ENCODE measurements at regions of chr16 and their contacts with region 1.

Region 1: GRCh38 chr16:74438492-74439041 is 17.3 kb upstream of the CLEC18B start:
- DNase-seq: no peak
- ATAC-seq: no peak
- H3K4me3 ChIP-seq: no peak overlapping the region
- H3K27ac ChIP-seq: no peak overlapping the region
- H3K4me1 ChIP-seq: peaks cover 0 to 9% of the 10 kb centered on the region in 2 donors
- H3K27me3 ChIP-seq: no peaks in the 10 kb centered on the region
- CTCF ChIP-seq: no peak

Region 2: DNA sequence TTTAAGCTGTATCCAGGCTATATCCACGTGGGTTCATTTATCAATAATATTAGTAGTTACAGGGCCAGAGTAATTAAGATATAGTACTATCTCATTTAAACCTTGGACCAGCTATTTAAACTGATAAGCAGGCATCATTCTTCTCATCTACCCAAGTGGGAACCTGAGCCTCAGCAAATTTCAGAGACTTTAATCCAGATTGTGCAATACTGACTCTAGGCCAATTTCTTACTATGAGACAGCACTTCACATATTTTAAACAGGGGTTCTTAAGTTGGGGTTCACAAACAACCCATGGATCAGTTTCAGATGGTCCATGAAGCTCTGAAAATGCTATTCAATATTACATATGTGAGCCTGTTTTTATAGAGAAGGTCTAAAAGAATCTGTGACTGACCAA is 444.7 kb before region 1 on chr16:
- intact Hi-C with region 1: no loop called
- DNase-seq: no peak
- ATAC-seq: no peak
- H3K4me3 ChIP-seq: no peak overlapping the region
- H3K27ac ChIP-seq: no peak overlapping the region
- H3K4me1 ChIP-seq: no peaks in the 10 kb centered on the region
- H3K27me3 ChIP-seq: no peaks in the 10 kb centered on the region
- CTCF ChIP-seq: no peak

Region 3: DNA sequence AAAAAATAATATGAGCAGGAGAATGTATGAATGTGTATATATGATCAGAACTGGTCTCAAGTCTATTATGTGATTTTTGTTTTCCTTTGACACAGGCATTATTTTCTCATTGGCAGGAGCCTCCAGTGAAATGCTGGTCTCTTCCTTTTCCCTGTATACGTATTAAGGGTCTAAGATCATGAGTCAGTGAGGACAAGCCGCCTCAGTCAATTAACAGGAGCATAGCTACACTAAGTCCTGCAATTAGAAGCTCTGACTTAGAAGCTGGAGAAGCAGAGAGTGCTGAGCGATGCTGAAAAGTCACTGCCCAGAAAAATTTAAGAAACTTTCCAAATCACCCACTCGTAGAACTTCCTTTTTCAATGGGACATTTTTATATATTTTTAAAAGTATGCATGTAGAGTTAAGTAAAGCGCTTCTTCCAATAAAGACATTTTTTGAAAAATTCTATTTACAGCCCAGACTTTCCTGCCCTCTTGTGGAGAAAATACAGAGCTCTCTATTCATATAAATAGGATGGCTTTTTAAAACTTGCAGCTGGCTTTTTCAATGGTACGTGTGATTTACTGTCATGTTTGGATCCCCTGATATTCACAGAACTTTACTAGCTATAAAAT is 212.1 kb before region 1 on chr16:
- intact Hi-C with region 1: no loop called
- DNase-seq: peak in 2 of 4 donors; percentile 46 to 58
- ATAC-seq: no peak
- H3K4me3 ChIP-seq: no peak overlapping the region
- H3K27ac ChIP-seq: no peak overlapping the region
- H3K4me1 ChIP-seq: no peaks in the 10 kb centered on the region
- H3K27me3 ChIP-seq: no peaks in the 10 kb centered on the region
- CTCF ChIP-seq: peak in 1 of 2 donors; percentile 27

Region 4: DNA sequence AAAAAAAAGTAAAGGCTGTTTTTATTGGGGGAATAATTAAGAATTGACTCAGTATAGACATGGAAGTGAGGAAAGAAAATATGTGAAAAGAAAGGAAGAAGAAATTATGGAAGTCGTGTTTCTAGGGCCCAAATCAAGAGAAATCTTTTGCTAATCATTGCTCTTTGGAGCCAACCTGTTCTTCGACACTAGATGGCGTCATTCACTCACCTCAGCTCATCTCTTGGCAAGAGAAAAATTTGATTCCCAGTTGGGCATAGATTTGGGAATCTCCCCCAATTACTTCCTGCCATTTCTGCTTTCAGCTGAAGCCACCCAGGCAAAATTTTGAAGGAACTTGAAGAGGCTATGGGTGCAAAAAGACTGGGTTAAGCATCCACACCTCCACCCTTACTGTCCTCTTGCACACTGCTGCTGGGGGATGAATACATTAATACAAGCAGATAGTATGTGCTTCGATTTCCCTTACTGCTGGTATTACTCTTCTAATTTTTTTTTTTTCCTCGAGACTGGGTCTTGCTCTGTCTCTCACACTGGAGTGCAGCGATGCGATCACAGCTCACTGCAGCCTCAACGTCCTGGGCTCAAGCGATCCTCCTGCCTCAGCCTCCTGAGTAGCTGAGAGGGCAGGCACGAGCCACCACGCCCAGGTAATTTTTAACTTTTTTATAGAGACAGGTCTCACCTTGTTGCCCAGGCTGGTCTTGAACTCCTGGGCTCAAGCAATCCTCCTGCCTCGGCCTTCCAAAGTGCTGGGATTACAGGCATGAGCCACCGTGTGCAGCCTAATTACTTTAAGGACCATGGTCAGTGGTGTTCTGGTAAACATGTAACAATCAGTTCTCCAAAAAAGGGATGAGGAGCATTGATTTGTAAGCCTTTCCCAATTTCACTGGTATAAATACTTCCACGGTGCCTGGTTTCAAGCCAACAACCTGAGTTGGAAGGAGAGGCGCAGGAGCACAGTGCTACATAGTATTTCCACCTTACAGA is 128.5 kb before region 1 on chr16:
- intact Hi-C with region 1: loop called in 1 of 2 experiments (anchors 10 kb)
- DNase-seq: peak in 2 of 4 donors; percentile 9 to 48
- ATAC-seq: peak; percentile 83
- H3K4me3 ChIP-seq: no peak overlapping the region
- H3K27ac ChIP-seq: no peak overlapping the region
- H3K4me1 ChIP-seq: no peaks in the 10 kb centered on the region
- H3K27me3 ChIP-seq: no peaks in the 10 kb centered on the region
- CTCF ChIP-seq: peak; percentile 54 to 56

Measured in left lung (tissue), 14 donors.